ENCODE measurements at regions of chr10 and their contacts with region 1.

Region 1: DNA sequence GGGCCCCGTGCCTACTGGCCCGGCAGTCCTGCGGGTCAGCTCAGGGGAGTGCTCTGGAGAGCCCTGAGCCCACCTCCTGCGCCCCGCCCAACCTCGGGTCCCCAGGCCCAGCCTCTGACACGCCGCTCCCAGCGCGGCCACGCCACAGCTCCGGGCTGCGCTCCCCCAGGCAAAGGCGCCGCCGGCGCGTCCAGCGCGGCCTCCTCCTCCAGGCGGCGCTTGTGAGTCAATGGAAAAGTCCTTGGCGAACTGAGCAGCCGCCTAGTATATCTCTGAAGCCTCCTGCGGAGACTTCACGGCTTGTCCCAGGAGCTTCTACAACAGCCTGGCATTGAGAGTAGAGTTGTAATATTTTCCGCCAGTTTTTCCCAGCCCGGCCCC is 29.5 kb upstream of the BMS1 start:
- DNase-seq: peak; percentile 50 to 65 (median 60)
- H3K4me3 ChIP-seq: peak overlapping the region; percentile 36 to 38
- H3K4me3 Mint-ChIP-seq: peak overlapping the region; percentile 81 to 92 (median 84)
- H3K27ac ChIP-seq: no peak overlapping the region
- H3K27ac Mint-ChIP-seq: no peak overlapping the region
- H3K4me1 ChIP-seq: peaks cover 13% of the 10 kb centered on the region
- H3K4me1 Mint-ChIP-seq: peaks cover 0 to 17% (median 4%) of the 10 kb centered on the region in 4 donors
- H3K27me3 ChIP-seq: peaks cover 12% of the 10 kb centered on the region
- H3K27me3 Mint-ChIP-seq: peaks cover 45 to 48% of the 10 kb centered on the region in 2 donors

Region 2: GRCh38 chr10:42768581-42769152 is 15.6 kb after region 1 on chr10:
- CTCF ChIA-PET with region 1: interaction called, 13 read pairs
- POLR2A ChIA-PET with region 1: no interaction called
- intact Hi-C with region 1: no loop called
- DNase-seq: no peak
- H3K4me3 ChIP-seq: no peak overlapping the region
- H3K4me3 Mint-ChIP-seq: no peak overlapping the region
- H3K27ac ChIP-seq: no peak overlapping the region
- H3K27ac Mint-ChIP-seq: no peak overlapping the region
- H3K4me1 ChIP-seq: no peaks in the 10 kb centered on the region
- H3K4me1 Mint-ChIP-seq: no peaks in the 10 kb centered on the region
- H3K27me3 ChIP-seq: no peaks in the 10 kb centered on the region
- H3K27me3 Mint-ChIP-seq: peaks cover 16 to 17% of the 10 kb centered on the region in 2 donors

Region 3: GRCh38 chr10:42782446-42783180 is 29.5 kb after region 1 on chr10 and contains the start of gene BMS1:
- CTCF ChIA-PET with region 1: interaction called, 4 read pairs
- POLR2A ChIA-PET with region 1: interaction called, 3 read pairs
- intact Hi-C with region 1: loop called (anchors 1 kb)
- DNase-seq: peak; percentile 89 to 91 (median 89)
- H3K4me3 ChIP-seq: peak within 1 kb of the TSS; percentile 47 to 88
- H3K4me3 Mint-ChIP-seq: peak within 1 kb of the TSS; percentile 96 to 99 (median 98)
- H3K27ac ChIP-seq: peak within 1 kb of the TSS; percentile 74
- H3K27ac Mint-ChIP-seq: peak within 1 kb of the TSS; percentile 93 to 99 (median 96)
- H3K4me1 ChIP-seq: peaks cover 22% of the 10 kb centered on the region
- H3K4me1 Mint-ChIP-seq: peaks cover 13 to 40% (median 29%) of the 10 kb centered on the region in 4 donors
- H3K27me3 ChIP-seq: no peaks in the 10 kb centered on the region
- H3K27me3 Mint-ChIP-seq: peaks cover 2% of the 10 kb centered on the region in 2 donors
- total RNA-seq, gene BMS1: 17.3 to 18.9 TPM

Region 4: DNA sequence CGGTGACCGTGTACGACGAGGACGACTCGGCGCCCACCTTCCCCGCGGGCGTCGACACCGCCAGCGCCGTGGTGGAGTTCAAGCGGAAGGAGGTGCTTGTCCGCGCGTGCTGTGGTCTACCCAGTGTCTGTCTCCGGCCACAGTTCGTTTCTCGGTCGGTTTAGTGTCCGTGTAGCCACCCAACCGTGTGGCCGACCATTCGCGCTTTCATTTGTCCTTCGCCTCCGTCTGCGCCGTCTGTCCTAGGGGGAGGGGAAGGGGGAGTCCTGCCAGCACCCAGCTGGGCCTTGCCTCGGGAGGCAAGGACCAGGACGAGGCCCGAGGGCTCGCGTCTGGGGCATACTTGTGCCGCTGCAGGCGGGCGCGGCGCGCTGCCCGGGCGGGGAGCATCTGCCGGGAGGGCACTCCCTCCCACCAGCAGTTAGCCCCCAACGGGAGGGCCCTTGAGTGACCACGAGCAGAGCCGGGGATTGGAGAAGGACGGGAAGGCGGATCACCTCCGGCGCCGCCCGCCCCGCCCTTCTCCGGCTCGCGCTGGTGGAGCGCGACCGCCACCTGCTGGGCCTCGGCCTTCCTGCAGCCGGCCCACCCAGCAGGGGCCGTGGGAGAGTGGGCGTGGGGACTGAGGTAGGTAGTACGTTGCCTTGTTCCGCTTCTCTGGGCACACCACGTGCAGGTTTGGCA is 352.1 kb after region 1 on chr10:
- CTCF ChIA-PET with region 1: interaction called, 14 read pairs
- POLR2A ChIA-PET with region 1: no interaction called
- intact Hi-C with region 1: no loop called
- DNase-seq: peak; percentile 69 to 79 (median 71)
- H3K4me3 ChIP-seq: peak overlapping the region; percentile 76 to 77
- H3K4me3 Mint-ChIP-seq: peak overlapping the region; percentile 70 to 84 (median 80)
- H3K27ac ChIP-seq: peak overlapping the region; percentile 19
- H3K27ac Mint-ChIP-seq: no peak overlapping the region
- H3K4me1 ChIP-seq: peaks cover 15% of the 10 kb centered on the region
- H3K4me1 Mint-ChIP-seq: peaks cover 5 to 13% (median 7%) of the 10 kb centered on the region in 4 donors
- H3K27me3 ChIP-seq: no peaks in the 10 kb centered on the region
- H3K27me3 Mint-ChIP-seq: peaks cover 13 to 17% of the 10 kb centered on the region in 2 donors

Region 5: DNA sequence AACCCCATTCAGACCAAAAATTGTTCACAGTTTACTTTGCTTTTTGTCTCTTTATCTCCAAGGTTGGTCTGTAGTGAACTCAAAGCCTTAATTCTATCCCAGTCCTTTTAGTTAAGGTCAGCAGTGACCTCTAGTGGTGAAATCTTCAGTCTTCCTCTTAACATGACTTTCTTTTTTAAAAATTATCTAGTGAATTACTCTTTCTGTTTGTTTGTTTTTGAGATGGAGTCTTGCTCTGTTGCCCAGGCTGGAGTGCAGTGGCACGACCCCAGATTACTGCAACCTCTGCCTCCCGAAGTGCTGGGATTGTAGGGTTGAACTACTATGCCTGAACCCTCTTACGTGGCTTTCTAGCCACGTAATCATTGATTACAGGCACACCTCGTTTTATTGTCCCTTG is 708.8 kb after region 1 on chr10:
- CTCF ChIA-PET with region 1: interaction called, 7 read pairs
- POLR2A ChIA-PET with region 1: no interaction called
- intact Hi-C with region 1: loop called (anchors 1 kb)
- DNase-seq: peak; percentile 58 to 75 (median 70)
- H3K4me3 ChIP-seq: no peak overlapping the region
- H3K4me3 Mint-ChIP-seq: peak overlapping the region in 1 of 8 donors; percentile 54
- H3K27ac ChIP-seq: no peak overlapping the region
- H3K27ac Mint-ChIP-seq: peak overlapping the region in 4 of 7 donors; percentile 20 to 71 (median 42)
- H3K4me1 ChIP-seq: peaks cover 2% of the 10 kb centered on the region
- H3K4me1 Mint-ChIP-seq: peaks cover 14 to 21% (median 16%) of the 10 kb centered on the region in 4 donors
- H3K27me3 ChIP-seq: no peaks in the 10 kb centered on the region
- H3K27me3 Mint-ChIP-seq: no peaks in the 10 kb centered on the region

Measured in CD4-positive, alpha-beta memory T cell (primary cell).